CD8-positive, alpha-beta T cell (primary cell): ENCODE measurements at regions of chr22 and their contacts with region 1.

Region 1: GRCh38 chr22:24845041-24845898 is 39.3 kb downstream of the SGSM1 start:
- DNase-seq: peak in 3 of 9 experiments; percentile 17 to 53 (median 36)
- ATAC-seq: no peak
- H3K4me3 ChIP-seq: no peak overlapping the region
- H3K4me3 Mint-ChIP-seq: no peak overlapping the region
- H3K27ac ChIP-seq: peak overlapping the region in 1 of 2 experiments; percentile 50
- H3K27ac Mint-ChIP-seq: no peak overlapping the region
- H3K4me1 ChIP-seq: peaks cover 4% of the 10 kb centered on the region
- H3K4me1 Mint-ChIP-seq: peaks cover 9% of the 10 kb centered on the region
- H3K27me3 ChIP-seq: no peaks in the 10 kb centered on the region
- H3K27me3 Mint-ChIP-seq: peaks cover 7% of the 10 kb centered on the region
- CTCF ChIP-seq: no peak

Region 2: DNA sequence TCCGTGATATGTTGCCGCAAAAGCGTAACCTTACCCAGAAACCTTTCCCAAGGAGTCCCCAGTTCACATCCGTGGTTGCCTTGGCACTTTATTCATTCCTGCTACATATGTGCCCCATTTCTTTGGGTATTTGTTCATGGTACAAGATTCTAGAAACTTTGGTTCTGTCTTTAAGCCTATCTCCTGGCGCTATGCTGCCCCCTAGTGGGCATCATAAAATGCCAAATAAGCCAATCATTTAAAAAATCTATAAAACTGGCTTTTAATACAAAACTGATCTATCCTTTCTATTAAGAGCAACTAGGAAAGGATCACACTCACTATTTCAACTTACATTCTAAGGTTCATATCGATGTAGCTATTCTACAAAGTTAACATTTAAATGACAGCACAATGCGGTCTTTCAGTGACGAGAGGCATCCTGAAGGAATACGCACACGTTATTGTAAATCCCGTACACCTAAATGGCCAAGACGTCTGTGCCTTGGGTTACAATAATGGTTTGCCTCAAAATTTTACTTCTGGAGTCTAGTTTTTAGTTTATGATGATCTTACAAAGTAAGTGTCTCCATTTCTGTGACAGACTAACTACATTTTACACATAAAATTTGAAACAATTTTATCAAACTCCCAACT is 87.0 kb before region 1 on chr22:
- CTCF ChIA-PET with region 1: interaction called, 11 read pairs
- POLR2A ChIA-PET with region 1: no interaction called
- intact Hi-C with region 1: no loop called
- DNase-seq: peak; percentile 7 to 71 (median 56)
- ATAC-seq: no peak
- H3K4me3 ChIP-seq: no peak overlapping the region
- H3K4me3 Mint-ChIP-seq: no peak overlapping the region
- H3K27ac ChIP-seq: no peak overlapping the region
- H3K27ac Mint-ChIP-seq: no peak overlapping the region
- H3K4me1 ChIP-seq: no peaks in the 10 kb centered on the region
- H3K4me1 Mint-ChIP-seq: no peaks in the 10 kb centered on the region
- H3K27me3 ChIP-seq: no peaks in the 10 kb centered on the region
- H3K27me3 Mint-ChIP-seq: no peaks in the 10 kb centered on the region
- CTCF ChIP-seq: peak; percentile 90

Region 3: DNA sequence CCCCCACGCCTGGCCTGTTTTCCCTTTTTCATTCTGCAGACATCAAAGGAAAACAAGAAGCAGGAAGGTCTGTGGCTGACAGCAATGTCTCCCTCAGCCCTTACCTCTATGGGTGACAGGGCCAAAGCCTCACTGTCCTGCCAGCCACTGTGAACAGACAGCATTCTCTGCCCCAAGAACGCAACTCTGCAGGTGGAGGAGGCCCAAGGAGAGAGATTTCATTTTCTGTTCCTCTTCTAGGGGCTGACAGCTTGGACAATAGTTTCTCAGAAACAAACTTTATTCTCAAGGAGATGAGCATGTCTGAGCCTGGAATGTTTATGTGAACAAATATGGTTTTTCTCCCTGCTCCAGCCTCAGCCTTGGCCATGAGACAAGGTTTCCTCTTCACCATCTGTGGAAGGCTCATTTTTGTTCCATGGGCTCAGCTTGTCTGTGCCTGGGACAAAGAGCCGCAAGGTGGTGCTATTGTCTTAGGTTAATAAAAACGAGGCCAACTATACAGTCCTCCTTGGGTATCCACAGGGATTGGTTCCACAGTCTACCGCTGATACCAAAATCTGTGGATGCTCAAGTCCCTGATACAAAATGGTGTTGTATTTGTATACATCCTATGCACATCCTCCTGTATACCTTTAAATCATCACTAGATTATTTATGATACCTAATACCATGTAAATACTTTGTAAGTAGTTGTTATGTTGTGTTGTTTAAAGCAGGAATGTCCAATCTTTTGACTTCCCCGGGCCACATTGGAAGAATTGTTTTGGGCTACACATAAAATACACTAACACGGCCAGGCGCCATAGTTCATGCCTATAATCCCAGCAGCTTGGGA is 76.5 kb before region 1 on chr22:
- CTCF ChIA-PET with region 1: interaction called, 40 read pairs
- POLR2A ChIA-PET with region 1: interaction called, 3 read pairs
- intact Hi-C with region 1: loop called in 1 of 2 experiments (anchors 1 kb)
- DNase-seq: peak in 7 of 9 experiments; percentile 9 to 62 (median 29)
- ATAC-seq: no peak
- H3K4me3 ChIP-seq: no peak overlapping the region
- H3K4me3 Mint-ChIP-seq: no peak overlapping the region
- H3K27ac ChIP-seq: no peak overlapping the region
- H3K27ac Mint-ChIP-seq: no peak overlapping the region
- H3K4me1 ChIP-seq: no peaks in the 10 kb centered on the region
- H3K4me1 Mint-ChIP-seq: no peaks in the 10 kb centered on the region
- H3K27me3 ChIP-seq: no peaks in the 10 kb centered on the region
- H3K27me3 Mint-ChIP-seq: peaks cover 7% of the 10 kb centered on the region
- CTCF ChIP-seq: peak; percentile 39

Region 4: DNA sequence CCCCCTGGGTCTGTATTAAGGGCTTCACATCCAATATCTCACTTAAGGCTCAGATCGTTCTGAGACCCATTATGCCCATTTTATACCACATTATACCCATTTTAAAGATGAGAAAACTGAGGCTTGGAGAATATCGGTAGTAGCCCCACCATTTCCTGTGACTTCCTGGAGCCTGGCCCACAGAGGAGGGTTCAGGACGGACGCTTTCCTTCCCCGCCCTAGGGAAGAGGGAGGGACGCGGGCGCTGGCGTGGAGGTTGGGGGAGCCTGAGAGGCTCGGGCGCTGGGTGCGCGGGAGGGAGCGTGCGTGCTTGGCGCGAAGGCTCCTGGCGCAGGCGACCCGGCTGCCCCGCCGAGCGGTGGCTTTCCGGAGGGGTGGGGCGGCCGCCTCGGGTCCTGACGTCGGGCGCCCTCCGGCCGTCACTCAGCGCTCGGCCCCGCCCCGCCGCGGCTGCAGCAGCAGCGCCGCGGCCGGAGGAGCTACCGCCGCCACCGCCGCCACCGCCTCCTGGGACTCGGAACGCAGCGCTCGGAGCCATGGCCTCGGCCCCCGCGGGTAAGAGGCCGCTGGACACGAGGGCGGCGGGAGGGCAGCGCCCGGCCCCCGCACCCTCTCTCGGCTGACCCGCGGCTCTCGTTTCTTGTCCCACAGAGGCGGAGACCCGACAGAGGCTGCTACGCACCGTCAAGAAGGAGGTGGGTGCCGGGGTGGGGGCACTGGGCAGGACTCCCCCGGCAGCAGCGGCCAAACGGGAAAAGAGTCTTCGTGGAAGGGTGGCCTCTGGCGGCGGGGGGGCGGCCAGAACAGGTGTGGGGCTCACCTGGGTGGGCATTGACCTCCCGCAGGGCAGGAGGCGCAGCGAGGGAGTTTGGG is 39.2 kb before region 1 on chr22 and contains the start of gene SGSM1:
- CTCF ChIA-PET with region 1: interaction called, 10 read pairs
- POLR2A ChIA-PET with region 1: no interaction called
- intact Hi-C with region 1: no loop called
- DNase-seq: peak; percentile 48 to 89 (median 71)
- ATAC-seq: peak; percentile 91
- H3K4me3 ChIP-seq: peak within 1 kb of the TSS; percentile 70
- H3K4me3 Mint-ChIP-seq: peak within 1 kb of the TSS; percentile 75
- H3K27ac ChIP-seq: peak within 1 kb of the TSS; percentile 30 to 46
- H3K27ac Mint-ChIP-seq: peak within 1 kb of the TSS; percentile 2
- H3K4me1 ChIP-seq: peaks cover 4% of the 10 kb centered on the region
- H3K4me1 Mint-ChIP-seq: peaks cover 9% of the 10 kb centered on the region
- H3K27me3 ChIP-seq: no peaks in the 10 kb centered on the region
- H3K27me3 Mint-ChIP-seq: no peaks in the 10 kb centered on the region
- CTCF ChIP-seq: no peak
- total RNA-seq, gene SGSM1: 0.84 to 1.7 TPM

Region 5: GRCh38 chr22:24977370-24978221 is 132.3 kb after region 1 on chr22:
- CTCF ChIA-PET with region 1: no interaction called
- POLR2A ChIA-PET with region 1: no interaction called
- intact Hi-C with region 1: no loop called
- DNase-seq: no peak
- ATAC-seq: no peak
- H3K4me3 ChIP-seq: no peak overlapping the region
- H3K4me3 Mint-ChIP-seq: no peak overlapping the region
- H3K27ac ChIP-seq: no peak overlapping the region
- H3K27ac Mint-ChIP-seq: no peak overlapping the region
- H3K4me1 ChIP-seq: no peaks in the 10 kb centered on the region
- H3K4me1 Mint-ChIP-seq: no peaks in the 10 kb centered on the region
- H3K27me3 ChIP-seq: no peaks in the 10 kb centered on the region
- H3K27me3 Mint-ChIP-seq: no peaks in the 10 kb centered on the region
- CTCF ChIP-seq: no peak